GM18951 (cell line): ENCODE measurements at regions of chr11 and their contacts with region 1.

Region 1: GRCh38 chr11:57249384-57250319 is 12.6 kb upstream of the APLNR start:
- POLR2A ChIP-seq: no peak

Region 2: GRCh38 chr11:56783448-56784041 is 466.1 kb before region 1 on chr11:
- in situ Hi-C with region 1: no loop called
- POLR2A ChIP-seq: no peak

Region 3: GRCh38 chr11:56841210-56841810 is 408.3 kb before region 1 on chr11:
- in situ Hi-C with region 1: loop called (anchors 10 kb)
- POLR2A ChIP-seq: no peak

Region 4: GRCh38 chr11:57116654-57117053 is 133.0 kb before region 1 on chr11:
- in situ Hi-C with region 1: loop called (anchors 10 kb)
- POLR2A ChIP-seq: no peak

Region 5: DNA sequence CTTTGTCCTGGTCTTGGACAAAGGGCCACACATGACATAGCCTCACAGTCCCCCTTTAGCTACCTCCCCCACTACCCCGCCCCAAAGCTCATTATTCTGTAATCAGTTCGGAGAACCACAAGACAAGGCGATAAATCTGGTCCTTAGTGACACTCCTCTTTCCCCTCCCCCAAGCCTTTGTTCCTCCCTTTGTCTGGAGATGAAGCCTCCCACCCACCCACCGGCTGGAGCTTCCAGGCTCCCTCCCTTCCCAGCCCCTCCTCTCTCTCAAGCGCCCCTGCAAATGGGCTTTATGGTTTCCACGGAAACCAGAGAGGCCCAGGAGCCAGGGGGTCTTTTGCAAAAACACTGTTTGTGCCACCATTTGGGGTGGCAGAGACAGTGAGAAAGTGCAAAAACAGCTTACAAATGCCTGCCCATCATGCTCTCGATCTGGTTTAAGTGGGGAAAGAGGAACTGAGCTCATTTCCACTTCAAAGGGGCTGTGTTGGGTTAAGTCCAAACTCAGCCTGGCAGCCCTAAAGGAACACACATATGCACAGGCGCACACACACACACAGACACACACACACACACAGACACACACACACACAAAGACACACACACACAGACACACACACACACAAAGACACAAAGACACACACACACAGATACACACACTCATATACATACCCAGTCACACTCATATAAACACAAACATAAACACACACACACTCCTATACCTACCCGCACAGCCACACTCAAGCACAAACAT is 36.1 kb before region 1 on chr11:
- in situ Hi-C with region 1: no loop called
- POLR2A ChIP-seq: no peak